ENCODE measurements at regions of chr5 and their contacts with region 1.

Region 1: DNA sequence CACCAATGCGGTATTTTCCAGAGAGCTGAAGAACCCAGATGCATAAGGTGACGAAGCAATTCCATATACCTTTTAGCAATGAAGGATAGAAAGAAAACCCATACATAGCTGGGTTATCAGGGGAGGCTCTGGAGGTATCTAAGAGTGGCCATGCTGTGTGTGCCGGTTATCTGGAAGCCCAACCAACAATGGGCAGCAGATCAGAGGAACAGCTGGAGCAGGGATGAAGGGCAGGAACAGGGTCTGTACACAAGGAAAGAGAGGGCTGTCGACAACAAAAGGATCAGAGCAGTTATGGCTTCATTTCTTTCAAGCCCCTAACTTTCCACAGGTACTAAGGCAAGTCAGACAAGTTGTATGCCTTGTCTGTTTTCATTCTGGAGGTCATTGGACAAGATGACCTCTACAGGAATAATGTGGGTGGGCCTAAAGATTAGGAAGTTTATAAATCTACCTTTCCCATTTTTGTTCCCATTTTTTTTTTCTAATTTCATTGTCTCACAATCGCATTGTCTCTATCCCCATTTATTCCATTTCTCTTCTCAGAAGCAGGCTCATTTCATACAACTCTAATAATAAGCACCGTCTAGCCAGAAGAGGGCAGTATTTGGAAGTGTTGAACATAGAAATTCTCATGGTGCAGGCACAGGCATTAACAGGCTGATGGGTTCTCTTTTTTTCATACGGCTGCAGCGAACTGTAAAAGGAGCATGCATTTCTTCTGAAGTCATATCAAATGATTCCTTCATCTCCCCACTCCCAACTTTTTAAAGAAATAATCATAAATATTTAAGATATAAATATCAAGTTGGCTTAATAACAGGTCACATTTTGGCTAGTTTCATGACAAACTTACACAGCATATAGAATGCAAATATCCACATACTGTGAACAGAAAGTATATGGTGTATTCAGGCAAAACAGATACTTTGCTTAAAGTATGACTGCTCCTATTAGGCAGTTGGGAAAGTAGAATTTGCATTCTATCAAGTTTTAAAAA is 63.5 kb downstream of the ZNF474 start:
- DNase-seq: peak; percentile 62
- H3K4me3 ChIP-seq: no peak overlapping the region
- H3K27ac ChIP-seq: no peak overlapping the region
- H3K4me1 ChIP-seq: no peaks in the 10 kb centered on the region
- H3K27me3 ChIP-seq: no peaks in the 10 kb centered on the region
- CTCF ChIP-seq: peak; percentile 64 to 65

Region 2: GRCh38 chr5:122063836-122064235 is 129.0 kb before region 1 on chr5:
- CTCF ChIA-PET with region 1: no interaction called
- dilution Hi-C with region 1: no loop called
- in situ Hi-C with region 1: no loop called
- intact Hi-C with region 1: no loop called
- DNase-seq: peak; percentile 5
- H3K4me3 ChIP-seq: no peak overlapping the region
- H3K27ac ChIP-seq: no peak overlapping the region
- H3K4me1 ChIP-seq: peaks cover 10% of the 10 kb centered on the region
- H3K27me3 ChIP-seq: no peaks in the 10 kb centered on the region
- CTCF ChIP-seq: no peak

Region 3: DNA sequence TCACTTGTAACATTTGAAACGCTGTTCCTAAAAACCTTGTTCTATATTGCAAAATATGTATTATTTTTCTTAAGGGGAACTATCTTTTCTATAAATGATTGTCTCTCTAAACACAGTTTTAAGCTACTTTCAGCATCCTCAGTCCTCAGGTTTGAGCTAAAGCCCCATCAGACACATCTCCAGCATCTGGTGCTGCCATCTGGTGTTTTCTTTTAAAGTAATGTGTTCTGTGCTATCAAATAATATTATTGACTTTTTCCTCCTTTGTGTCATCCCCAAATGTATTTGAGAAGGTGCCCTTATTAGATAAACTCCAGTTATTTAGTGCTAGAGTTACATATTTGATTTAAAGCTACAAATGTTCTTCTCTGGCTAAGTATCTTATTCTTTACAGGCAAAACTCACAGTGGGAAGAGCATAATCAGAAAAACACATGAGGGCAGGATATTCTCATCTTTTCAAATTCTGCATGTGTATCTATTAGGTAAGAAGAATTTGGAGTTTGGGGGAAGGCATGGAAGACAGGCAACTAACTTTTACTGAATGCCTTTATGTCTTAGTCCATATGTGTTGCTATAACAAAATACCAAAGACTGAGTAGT is 36.0 kb before region 1 on chr5:
- CTCF ChIA-PET with region 1: interaction called, 26 read pairs
- dilution Hi-C with region 1: no loop called
- in situ Hi-C with region 1: no loop called
- intact Hi-C with region 1: loop called (anchors 5 kb)
- DNase-seq: peak; percentile 45
- H3K4me3 ChIP-seq: no peak overlapping the region
- H3K27ac ChIP-seq: no peak overlapping the region
- H3K4me1 ChIP-seq: peaks cover 3% of the 10 kb centered on the region
- H3K27me3 ChIP-seq: no peaks in the 10 kb centered on the region
- CTCF ChIP-seq: peak; percentile 43 to 59

Region 4: DNA sequence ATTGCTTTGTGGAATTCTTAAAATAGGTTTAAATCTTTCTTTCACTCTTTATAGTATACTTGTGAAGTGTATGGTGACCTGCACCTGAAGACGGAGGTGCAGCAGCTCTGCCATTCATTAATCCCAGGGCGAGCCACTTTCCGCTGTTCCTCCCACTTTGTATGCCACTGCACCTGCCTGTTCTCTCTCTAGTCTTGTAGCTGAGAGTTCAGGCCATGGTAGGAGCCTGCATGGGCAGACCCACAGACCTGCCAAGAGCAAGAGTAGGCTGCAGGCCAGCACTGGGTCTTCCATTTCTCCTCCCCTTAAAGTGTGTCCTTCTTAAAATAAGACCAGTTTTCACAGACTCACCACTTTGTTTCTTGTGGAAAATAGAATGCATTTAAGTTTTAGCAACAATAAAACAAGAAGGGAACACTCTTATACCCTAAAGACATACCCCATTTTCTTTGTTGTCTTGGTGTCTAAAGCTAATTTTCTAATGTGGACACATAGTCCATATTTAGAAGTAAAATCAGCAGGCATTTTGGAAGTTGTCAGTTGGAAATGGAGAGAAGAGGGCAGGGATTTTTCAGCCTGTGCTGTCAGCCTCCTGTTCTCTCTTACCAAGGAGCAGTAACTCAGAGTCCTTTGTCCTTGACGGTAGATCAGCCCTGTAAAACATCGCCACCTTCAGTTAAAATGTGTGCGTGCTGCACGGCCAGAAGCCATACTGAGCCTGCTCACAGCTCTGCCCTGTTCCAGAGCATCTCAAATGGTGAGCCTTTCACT is 222.4 kb after region 1 on chr5:
- CTCF ChIA-PET with region 1: interaction called, 5 read pairs
- dilution Hi-C with region 1: no loop called
- in situ Hi-C with region 1: loop called (anchors 10 kb)
- intact Hi-C with region 1: loop called (anchors 1 kb)
- DNase-seq: peak; percentile 41
- H3K4me3 ChIP-seq: no peak overlapping the region
- H3K27ac ChIP-seq: no peak overlapping the region
- H3K4me1 ChIP-seq: no peaks in the 10 kb centered on the region
- H3K27me3 ChIP-seq: peaks cover 1% of the 10 kb centered on the region
- CTCF ChIP-seq: peak; percentile 61 to 84

Region 5: DNA sequence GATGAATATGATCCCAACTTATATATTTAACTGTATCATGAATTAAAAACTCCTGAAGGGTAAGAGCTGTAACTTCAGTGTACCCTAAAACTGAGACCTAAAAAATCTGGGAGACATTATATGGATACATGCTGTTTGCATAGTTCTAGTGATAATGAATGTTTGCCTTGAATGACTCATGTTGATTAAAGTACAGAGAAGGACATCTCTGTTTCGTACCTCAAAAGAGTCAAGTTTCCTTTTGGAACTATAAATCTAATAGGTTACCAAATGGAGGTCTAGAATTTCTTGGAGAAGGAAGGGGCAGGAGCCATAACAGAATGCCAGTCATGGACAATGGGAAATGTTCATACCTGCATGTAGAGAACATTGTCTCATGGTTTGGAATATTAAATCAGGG is 287.3 kb after region 1 on chr5:
- CTCF ChIA-PET with region 1: no interaction called
- dilution Hi-C with region 1: no loop called
- in situ Hi-C with region 1: no loop called
- intact Hi-C with region 1: no loop called
- DNase-seq: no peak
- H3K4me3 ChIP-seq: no peak overlapping the region
- H3K27ac ChIP-seq: no peak overlapping the region
- H3K4me1 ChIP-seq: no peaks in the 10 kb centered on the region
- H3K27me3 ChIP-seq: no peaks in the 10 kb centered on the region
- CTCF ChIP-seq: no peak

Region 6: DNA sequence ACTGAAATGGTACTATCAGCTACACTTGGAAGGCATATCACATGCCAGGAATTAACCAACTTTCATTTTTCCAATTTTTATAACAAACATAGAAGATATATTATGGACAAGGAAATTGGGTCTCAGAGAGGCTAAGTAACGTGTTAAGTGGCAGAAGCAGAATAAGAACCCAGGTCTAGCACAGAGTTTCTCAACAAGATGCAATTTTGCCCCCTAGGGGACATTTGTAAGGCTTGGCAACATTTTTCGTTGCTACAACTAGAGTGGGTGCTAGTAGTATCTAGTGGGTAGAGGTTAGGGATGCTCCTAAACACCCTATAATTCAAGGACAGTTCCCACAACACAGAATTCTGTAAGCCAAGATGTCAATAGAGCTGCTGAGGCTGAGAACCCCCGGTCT is 299.9 kb after region 1 on chr5:
- CTCF ChIA-PET with region 1: no interaction called
- dilution Hi-C with region 1: no loop called
- in situ Hi-C with region 1: no loop called
- intact Hi-C with region 1: loop called (anchors 2 kb)
- DNase-seq: no peak
- H3K4me3 ChIP-seq: no peak overlapping the region
- H3K27ac ChIP-seq: no peak overlapping the region
- H3K4me1 ChIP-seq: no peaks in the 10 kb centered on the region
- H3K27me3 ChIP-seq: peaks cover 2% of the 10 kb centered on the region
- CTCF ChIP-seq: peak; percentile 24 to 47